ENCODE measurements at regions of chr16 and their contacts with region 1.

Region 1: DNA sequence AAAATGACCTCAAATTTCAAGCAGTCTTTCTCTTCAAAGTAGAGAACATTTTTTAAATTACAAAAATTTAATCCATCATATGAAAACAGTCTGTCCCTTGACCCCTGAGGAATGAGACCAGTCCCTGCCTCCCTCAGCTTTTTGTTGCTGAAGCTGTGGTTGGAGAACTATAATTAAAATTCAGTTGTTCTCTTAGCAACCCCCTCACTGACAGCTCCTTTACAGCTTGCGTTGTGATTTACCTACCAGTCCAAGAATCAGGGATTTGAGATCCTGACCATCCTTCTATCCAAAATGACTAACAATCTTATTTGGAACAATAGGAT is 29.8 kb downstream of the LYRM1 start:
- H3K4me3 ChIP-seq: no peak overlapping the region
- H3K27ac ChIP-seq: no peak overlapping the region
- H3K4me1 ChIP-seq: no peaks in the 10 kb centered on the region
- CTCF ChIP-seq: no peak

Region 2: GRCh38 chr16:20806168-20807050 is 123.9 kb before region 1 on chr16 and contains the starts of genes ERI2 and REXO5:
- CTCF ChIA-PET with region 1: no interaction called
- POLR2A ChIA-PET with region 1: no interaction called
- H3K4me3 ChIP-seq: peak within 1 kb of the TSS; percentile 70
- H3K27ac ChIP-seq: peak within 1 kb of the TSS; percentile 96
- H3K4me1 ChIP-seq: no peaks in the 10 kb centered on the region
- CTCF ChIP-seq: peak; percentile 94

Region 3: GRCh38 chr16:20987049-20987448 is 56.7 kb after region 1 on chr16:
- CTCF ChIA-PET with region 1: no interaction called
- POLR2A ChIA-PET with region 1: interaction called, 11 read pairs
- H3K4me3 ChIP-seq: no peak overlapping the region
- H3K27ac ChIP-seq: no peak overlapping the region
- H3K4me1 ChIP-seq: no peaks in the 10 kb centered on the region
- CTCF ChIP-seq: no peak